Calu3 (cell line): ENCODE measurements at regions of chr17 and their contacts with region 1.

Region 1: GRCh38 chr17:13337864-13338371 is 263.8 kb downstream of the HS3ST3A1 start:
- DNase-seq: peak; percentile 1
- H3K4me3 Mint-ChIP-seq: no peak overlapping the region
- H3K27ac Mint-ChIP-seq: no peak overlapping the region
- H3K4me1 Mint-ChIP-seq: no peaks in the 10 kb centered on the region
- H3K27me3 Mint-ChIP-seq: no peaks in the 10 kb centered on the region
- CTCF ChIP-seq: no peak

Region 2: GRCh38 chr17:13031718-13032350 is 306.1 kb before region 1 on chr17:
- CTCF ChIA-PET with region 1: no interaction called
- intact Hi-C with region 1: loop called (anchors 5 kb)
- DNase-seq: peak; percentile 42
- H3K4me3 Mint-ChIP-seq: no peak overlapping the region
- H3K27ac Mint-ChIP-seq: no peak overlapping the region
- H3K4me1 Mint-ChIP-seq: no peaks in the 10 kb centered on the region
- H3K27me3 Mint-ChIP-seq: peaks cover 16% of the 10 kb centered on the region
- CTCF ChIP-seq: peak; percentile 52

Region 3: GRCh38 chr17:13194887-13195286 is 143.0 kb before region 1 on chr17:
- CTCF ChIA-PET with region 1: no interaction called
- intact Hi-C with region 1: no loop called
- DNase-seq: no peak
- H3K4me3 Mint-ChIP-seq: no peak overlapping the region
- H3K27ac Mint-ChIP-seq: no peak overlapping the region
- H3K4me1 Mint-ChIP-seq: no peaks in the 10 kb centered on the region
- H3K27me3 Mint-ChIP-seq: no peaks in the 10 kb centered on the region
- CTCF ChIP-seq: no peak

Region 4: GRCh38 chr17:15157051-15157450 is 1819.1 kb after region 1 on chr17:
- CTCF ChIA-PET with region 1: interaction called, 4 read pairs
- intact Hi-C with region 1: loop called (anchors 5 kb)
- DNase-seq: no peak
- H3K4me3 Mint-ChIP-seq: no peak overlapping the region
- H3K27ac Mint-ChIP-seq: no peak overlapping the region
- H3K4me1 Mint-ChIP-seq: no peaks in the 10 kb centered on the region
- H3K27me3 Mint-ChIP-seq: peaks cover 18% of the 10 kb centered on the region
- CTCF ChIP-seq: no peak